Mammary epithelial cell (primary cell): ENCODE measurements at regions of chr12 and their contacts with region 1.

Region 1: DNA sequence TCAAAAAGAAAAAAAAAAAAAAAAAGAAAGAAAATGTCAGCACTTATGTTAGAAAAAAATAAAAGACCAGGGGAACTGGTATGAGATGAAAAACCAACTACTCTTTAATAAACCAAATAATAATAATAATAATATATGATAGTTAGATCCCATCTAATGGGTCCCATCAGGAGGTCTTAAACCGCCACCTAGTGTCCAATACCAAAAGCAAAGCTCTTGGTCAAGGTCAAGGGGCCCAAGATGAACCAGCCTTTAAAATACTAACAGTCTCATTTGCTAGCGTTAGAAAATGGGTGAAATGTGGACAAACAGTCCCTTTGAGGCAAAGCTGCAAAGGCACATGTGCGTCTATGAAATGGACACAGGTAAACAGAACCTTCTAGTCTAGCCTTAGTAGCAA is 12.3 kb downstream of the BRAP start:
- DNase-seq: no peak
- H3K4me3 ChIP-seq: no peak overlapping the region
- H3K27ac ChIP-seq: no peak overlapping the region
- H3K4me1 ChIP-seq: no peaks in the 10 kb centered on the region
- H3K27me3 ChIP-seq: no peaks in the 10 kb centered on the region
- CTCF ChIP-seq: peak; percentile 38 to 47

Region 2: DNA sequence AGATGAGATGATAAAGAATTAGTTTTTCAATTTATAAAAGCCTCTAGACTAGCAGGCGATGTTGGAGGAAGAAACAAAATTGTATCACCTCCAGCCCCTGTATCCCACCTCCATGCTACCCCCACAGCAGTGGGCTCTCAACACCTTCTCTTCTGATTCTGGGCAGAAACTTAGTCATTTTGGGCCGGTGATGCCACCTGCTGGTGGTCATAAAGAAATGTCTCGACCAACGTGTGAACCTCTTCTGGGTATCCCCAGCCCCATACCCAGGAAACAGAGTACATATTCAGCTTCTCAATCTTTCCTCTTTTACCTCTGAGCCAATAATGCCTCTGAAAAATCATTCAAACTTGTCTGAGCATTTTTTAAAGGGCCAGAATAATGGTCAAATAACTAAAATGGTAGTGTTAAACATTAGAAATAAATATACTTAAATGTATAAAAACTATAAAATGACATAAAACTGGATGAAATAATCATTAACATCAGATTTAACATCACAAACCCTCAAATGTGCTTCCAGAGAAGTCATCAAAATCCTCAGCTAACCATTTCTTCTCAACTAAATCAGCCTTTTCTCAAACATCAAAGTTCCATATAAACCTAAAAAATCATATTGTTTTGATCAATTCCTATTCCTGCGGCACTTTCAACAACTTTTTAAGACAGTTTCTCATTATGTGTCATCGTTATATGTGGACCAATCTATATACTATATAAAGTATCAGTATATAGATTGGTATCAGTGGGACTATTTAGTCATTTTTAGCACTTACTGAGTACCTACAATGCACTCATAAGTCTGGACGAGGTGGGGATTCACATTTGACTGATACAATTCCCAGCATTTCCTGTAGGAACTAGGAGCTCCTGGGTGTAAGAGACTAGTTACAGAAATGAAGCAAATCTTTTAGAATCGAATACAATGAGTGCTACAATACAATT is 143.8 kb before region 1 on chr12:
- CTCF ChIA-PET with region 1: no interaction called
- dilution Hi-C with region 1: no loop called
- in situ Hi-C with region 1: no loop called
- intact Hi-C with region 1: loop called (anchors 10 kb)
- DNase-seq: peak; percentile 24
- H3K4me3 ChIP-seq: no peak overlapping the region
- H3K27ac ChIP-seq: no peak overlapping the region
- H3K4me1 ChIP-seq: no peaks in the 10 kb centered on the region
- H3K27me3 ChIP-seq: no peaks in the 10 kb centered on the region
- CTCF ChIP-seq: peak; percentile 60 to 73

Region 3: DNA sequence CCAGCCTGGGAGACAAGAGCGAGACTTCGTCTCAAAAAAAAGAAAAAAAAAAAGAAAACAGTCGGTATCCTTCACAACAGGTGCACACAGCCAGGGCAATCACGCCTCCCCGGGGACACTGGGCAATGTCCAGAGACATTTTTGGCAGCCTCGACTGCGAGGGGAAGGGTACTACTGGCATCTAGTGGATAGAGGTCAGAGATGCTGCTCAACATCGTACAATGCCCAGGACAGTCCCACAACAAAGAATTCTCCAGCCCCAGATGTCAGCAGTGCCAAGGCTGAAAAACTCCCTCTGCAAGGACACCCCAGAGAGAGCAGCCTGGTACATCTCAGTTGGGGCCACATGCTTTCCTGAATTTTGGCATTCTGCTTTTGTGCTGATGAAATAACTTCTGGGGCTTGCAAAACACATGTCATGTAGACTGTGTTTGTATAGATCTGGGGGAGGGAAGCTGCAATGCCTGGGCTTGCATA is 114.7 kb after region 1 on chr12:
- CTCF ChIA-PET with region 1: no interaction called
- dilution Hi-C with region 1: no loop called
- in situ Hi-C with region 1: no loop called
- intact Hi-C with region 1: no loop called
- DNase-seq: no peak
- H3K4me3 ChIP-seq: no peak overlapping the region
- H3K27ac ChIP-seq: no peak overlapping the region
- H3K4me1 ChIP-seq: no peaks in the 10 kb centered on the region
- H3K27me3 ChIP-seq: no peaks in the 10 kb centered on the region
- CTCF ChIP-seq: peak; percentile 27 to 81